PC-9 (cell line): ENCODE measurements at regions of chr1 and their contacts with region 1.

Region 1: GRCh38 chr1:175498002-175498401 is 245.4 kb downstream of the TNR start:
- DNase-seq: peak in 1 of 2 experiments; percentile 49
- H3K4me3 ChIP-seq: no peak overlapping the region
- H3K27ac ChIP-seq: no peak overlapping the region
- H3K4me1 ChIP-seq: no peaks in the 10 kb centered on the region
- H3K27me3 ChIP-seq: peaks cover 83% of the 10 kb centered on the region
- CTCF ChIP-seq: no peak

Region 2: DNA sequence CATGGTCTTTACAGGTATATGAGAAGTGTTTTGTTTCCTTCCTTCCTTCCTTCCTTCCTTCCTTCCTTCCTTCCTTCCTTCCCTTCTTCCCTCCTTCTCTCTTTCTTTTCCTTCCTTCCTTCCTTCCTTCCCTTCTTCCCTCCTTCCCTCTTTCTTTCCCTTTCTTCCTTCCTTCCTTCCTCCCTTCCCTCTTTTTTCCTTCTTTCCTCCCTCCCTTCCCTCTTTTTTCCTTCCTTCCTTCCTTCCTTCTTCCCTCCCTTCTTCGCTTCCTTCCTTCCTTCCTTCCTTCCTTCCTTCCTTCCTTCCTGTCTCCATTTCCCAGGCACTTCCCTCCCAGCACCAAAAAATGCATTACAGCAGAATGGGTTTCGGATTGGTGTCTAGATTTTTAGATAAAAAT is 70.4 kb before region 1 on chr1:
- CTCF ChIA-PET with region 1: interaction called, 12 read pairs
- POLR2A ChIA-PET with region 1: no interaction called
- intact Hi-C with region 1: no loop called
- DNase-seq: no peak
- H3K4me3 ChIP-seq: no peak overlapping the region
- H3K27ac ChIP-seq: no peak overlapping the region
- H3K4me1 ChIP-seq: no peaks in the 10 kb centered on the region
- H3K27me3 ChIP-seq: no peaks in the 10 kb centered on the region; the same call in 1 of the 2 replicates
- CTCF ChIP-seq: no peak